Activated CD4-positive, alpha-beta memory T cell treated with anti-CD3 and anti-CD28 coated beads for 36 hours (primary cell): ENCODE measurements at regions of chr17 and their contacts with region 1.

Region 1: DNA sequence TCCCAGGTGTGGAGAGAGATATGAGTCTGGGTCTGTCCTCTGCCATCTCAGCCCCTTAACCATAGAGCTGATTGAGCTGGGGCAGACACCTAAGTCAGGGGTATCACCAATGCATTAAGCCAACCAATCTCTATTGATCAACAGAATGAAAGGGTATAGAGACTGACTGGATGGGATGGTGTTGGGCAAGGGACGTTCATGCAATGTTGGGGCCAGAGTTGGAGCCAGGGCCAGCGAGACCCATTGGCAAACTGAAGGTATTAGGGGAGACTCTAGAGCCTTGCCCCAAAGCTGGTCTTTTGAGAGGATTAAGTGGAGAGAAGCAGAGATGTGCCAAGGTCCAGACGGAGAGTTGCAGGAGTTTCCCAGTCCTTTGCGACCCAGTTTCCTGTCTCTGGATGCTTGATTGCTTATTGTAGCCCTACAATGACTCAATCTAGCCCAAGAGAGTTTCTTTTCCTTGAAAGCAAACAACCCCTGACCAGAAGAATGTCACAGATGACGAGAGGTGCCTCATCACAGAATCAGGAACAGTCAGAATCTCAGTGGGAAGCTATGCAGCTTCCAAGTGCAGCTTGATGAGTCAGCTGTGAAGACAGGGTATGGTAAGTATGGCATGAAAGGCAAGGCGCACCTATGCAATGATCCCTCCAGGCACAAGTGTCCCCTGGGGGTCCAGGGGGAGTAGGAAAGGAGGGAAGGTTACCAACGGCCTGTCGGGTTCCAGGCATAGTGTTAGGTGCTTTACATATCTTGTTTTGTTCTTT is 137.2 kb downstream of the UTP18 start:
- DNase-seq: peak; percentile 11
- H3K4me3 Mint-ChIP-seq: no peak overlapping the region
- H3K27ac Mint-ChIP-seq: no peak overlapping the region
- H3K4me1 Mint-ChIP-seq: no peaks in the 10 kb centered on the region
- H3K27me3 Mint-ChIP-seq: no peaks in the 10 kb centered on the region

Region 2: DNA sequence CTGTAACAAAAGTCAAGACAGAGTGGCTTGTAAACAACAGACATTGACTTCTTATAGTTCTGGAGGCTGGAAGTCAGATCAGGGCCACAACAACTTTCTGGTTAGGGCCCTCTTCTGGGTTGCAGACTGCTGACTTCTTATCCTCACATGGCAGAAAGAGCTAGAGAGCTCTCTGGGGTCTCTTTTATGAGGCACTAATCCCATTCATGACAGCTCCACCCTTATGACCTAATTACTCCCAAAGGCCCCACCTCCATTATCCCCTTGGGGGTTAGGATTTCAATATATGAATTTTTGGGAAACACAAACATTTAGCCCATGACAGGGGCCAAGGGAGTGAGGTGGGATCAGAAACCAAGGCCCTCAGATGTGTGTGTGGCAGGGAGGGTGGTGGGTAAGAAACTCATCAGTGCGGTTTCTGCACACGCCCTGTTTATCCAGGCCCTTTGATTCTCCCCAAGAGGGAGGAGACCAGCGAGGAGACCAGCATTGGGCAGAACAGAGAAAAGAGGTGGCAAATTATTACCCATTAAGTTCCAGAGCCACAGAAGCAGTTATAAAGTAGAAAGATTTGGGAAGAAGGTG is 62.4 kb before region 1 on chr17:
- CTCF ChIA-PET with region 1: no interaction called
- POLR2A ChIA-PET with region 1: no interaction called
- intact Hi-C with region 1: no loop called
- DNase-seq: no peak
- H3K4me3 Mint-ChIP-seq: no peak overlapping the region
- H3K27ac Mint-ChIP-seq: no peak overlapping the region
- H3K4me1 Mint-ChIP-seq: no peaks in the 10 kb centered on the region
- H3K27me3 Mint-ChIP-seq: peaks cover 1% of the 10 kb centered on the region

Region 3: GRCh38 chr17:51378059-51378458 is 19.5 kb before region 1 on chr17:
- CTCF ChIA-PET with region 1: no interaction called
- POLR2A ChIA-PET with region 1: no interaction called
- intact Hi-C with region 1: no loop called
- DNase-seq: no peak
- H3K4me3 Mint-ChIP-seq: no peak overlapping the region
- H3K27ac Mint-ChIP-seq: no peak overlapping the region
- H3K4me1 Mint-ChIP-seq: no peaks in the 10 kb centered on the region
- H3K27me3 Mint-ChIP-seq: no peaks in the 10 kb centered on the region

Region 4: GRCh38 chr17:51427856-51428255 is 30.3 kb after region 1 on chr17:
- CTCF ChIA-PET with region 1: no interaction called
- POLR2A ChIA-PET with region 1: no interaction called
- intact Hi-C with region 1: loop called (anchors 2 kb)
- DNase-seq: peak; percentile 88
- H3K4me3 Mint-ChIP-seq: peak overlapping the region; percentile 35
- H3K27ac Mint-ChIP-seq: peak overlapping the region; percentile 91
- H3K4me1 Mint-ChIP-seq: peaks cover 51% of the 10 kb centered on the region
- H3K27me3 Mint-ChIP-seq: no peaks in the 10 kb centered on the region